ENCODE measurements at regions of chr4 and their contacts with region 1.

Region 1: GRCh38 chr4:169810325-169811323 is 52.9 kb upstream of the HPF1 start:
- DNase-seq: no peak
- H3K4me3 ChIP-seq: no peak overlapping the region
- H3K27ac ChIP-seq: no peak overlapping the region
- H3K4me1 ChIP-seq: no peaks in the 10 kb centered on the region
- H3K27me3 ChIP-seq: peaks cover 18% of the 10 kb centered on the region
- CTCF ChIP-seq: peak; percentile 86

Region 2: GRCh38 chr4:170047771-170048354 is 237.2 kb after region 1 on chr4:
- intact Hi-C with region 1: loop called (anchors 5 kb)
- DNase-seq: no peak
- H3K4me3 ChIP-seq: no peak overlapping the region
- H3K27ac ChIP-seq: no peak overlapping the region
- H3K4me1 ChIP-seq: no peaks in the 10 kb centered on the region
- H3K27me3 ChIP-seq: peaks cover 15% of the 10 kb centered on the region
- CTCF ChIP-seq: peak; percentile 80

Measured in left ventricle myocardium inferior (tissue), 1 donor.